Heart right ventricle (tissue), 16 donors: ENCODE measurements at regions of chr5 and their contacts with region 1.

Region 1: GRCh38 chr5:119397518-119398380 is 41.9 kb downstream of the TNFAIP8 start:
- DNase-seq: no peak
- ATAC-seq: no peak
- H3K4me3 ChIP-seq: no peak overlapping the region
- H3K27ac ChIP-seq: peak overlapping the region in 1 of 10 donors; percentile 82
- H3K4me1 ChIP-seq: peaks cover 0 to 66% (median 7%) of the 10 kb centered on the region in 9 donors
- H3K27me3 ChIP-seq: no peaks in the 10 kb centered on the region
- CTCF ChIP-seq: no peak

Region 2: DNA sequence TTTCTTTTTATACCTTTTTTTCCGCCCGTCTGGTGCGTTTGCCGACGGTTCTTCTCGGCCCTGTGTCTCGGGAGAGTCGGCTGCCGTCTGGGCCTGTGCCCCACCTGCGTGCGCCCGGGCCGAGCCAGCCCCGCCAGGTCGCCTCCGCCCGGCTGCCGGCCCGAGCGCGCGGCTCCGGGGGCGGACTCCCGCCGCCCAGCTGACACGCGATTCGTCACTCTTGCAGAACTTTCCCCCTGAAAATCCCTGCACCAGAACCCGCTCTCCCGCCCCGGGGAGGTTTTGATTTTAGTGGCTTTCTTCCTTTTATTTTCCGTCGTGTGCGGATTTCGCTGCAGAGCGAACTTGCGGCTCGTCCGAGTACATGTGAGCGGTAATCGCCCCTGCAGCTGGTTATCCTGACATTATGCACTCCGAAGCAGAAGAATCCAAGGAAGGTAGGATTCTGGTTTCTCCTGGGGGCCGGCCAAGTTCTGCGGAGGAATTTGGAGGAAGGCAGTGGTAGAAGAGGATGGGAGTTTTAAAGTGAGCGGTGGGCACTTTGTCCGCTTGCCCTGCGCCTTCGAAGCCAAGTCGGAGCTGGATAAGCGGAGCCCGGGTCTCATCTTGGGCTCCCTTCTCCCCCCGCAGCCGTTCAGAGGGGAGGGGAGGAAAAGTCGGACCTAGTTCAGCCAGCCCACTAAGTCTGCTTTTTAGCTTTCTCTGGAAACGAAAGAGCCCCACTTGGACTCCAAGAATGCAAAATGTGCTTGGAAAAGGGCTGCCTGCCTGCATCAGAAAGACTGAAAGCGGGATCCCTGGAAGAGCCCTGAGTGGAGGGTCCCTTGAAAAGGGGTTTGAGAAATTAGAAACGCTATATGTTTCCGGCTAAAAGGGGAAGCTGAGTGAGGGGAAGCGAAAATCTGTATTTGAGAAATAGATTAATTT is 41.8 kb before region 1 on chr5 and contains the start of gene TNFAIP8:
- intact Hi-C with region 1: loop called in 1 of 10 experiments (anchors 5 kb)
- DNase-seq: peak; percentile 60
- ATAC-seq: peak; percentile 83 to 92 (median 86)
- H3K4me3 ChIP-seq: peak within 1 kb of the TSS; percentile 38 to 83 (median 64)
- H3K27ac ChIP-seq: peak within 1 kb of the TSS in 8 of 10 donors; percentile 12 to 92 (median 54)
- H3K4me1 ChIP-seq: peaks cover 0 to 71% (median 12%) of the 10 kb centered on the region in 9 donors
- H3K27me3 ChIP-seq: no peaks in the 10 kb centered on the region
- CTCF ChIP-seq: no peak
- total RNA-seq, gene TNFAIP8: 3.3 to 30.8 (median 10.1) TPM